Activated CD8-positive, alpha-beta memory T cell treated with anti-CD3 and anti-CD28 coated beads, Interleukin-2, amount 10 ng/mL, durations not matched to agents 7 days and 5 days (primary cell): ENCODE measurements at regions of chr3 and their contacts with region 1.

Region 1: GRCh38 chr3:171248425-171249111 is 211.6 kb downstream of the TNIK start:
- DNase-seq: no peak
- ATAC-seq: peak; percentile 76
- H3K4me3 Mint-ChIP-seq: no peak overlapping the region
- H3K27ac Mint-ChIP-seq: no peak overlapping the region
- H3K4me1 Mint-ChIP-seq: peaks cover 34% of the 10 kb centered on the region
- H3K27me3 Mint-ChIP-seq: no peaks in the 10 kb centered on the region

Region 2: DNA sequence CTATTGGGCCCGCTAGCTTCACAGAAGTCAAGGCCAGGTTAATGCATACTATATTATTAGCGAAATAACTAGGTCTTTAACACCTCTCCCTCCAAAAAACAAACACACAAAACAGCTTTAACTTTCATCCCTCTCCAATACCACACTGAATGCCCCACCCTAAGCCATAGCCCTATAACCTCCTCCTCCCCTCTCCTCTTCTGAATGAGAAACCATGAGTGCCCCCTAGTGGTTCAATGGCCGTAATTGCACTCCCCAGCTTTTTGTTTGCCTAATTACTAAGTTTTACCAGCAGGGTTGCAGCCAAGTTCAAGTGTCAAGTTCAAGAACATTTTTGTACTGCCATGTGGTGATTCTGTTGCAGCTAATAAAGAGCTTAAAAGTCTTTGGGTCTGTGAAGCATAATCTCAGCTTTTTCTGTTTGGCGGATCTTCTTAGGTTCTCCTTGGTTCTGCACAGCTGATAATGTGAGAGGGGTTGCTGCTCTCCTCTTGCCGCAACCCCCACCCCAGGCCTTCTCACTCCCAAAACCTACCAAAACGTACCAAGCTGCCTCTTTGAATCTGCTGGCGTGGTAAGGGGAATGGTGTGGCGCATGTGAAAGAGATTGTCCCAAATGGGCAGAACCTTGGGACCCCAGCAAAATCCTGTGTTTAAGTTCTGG is 436.5 kb before region 1 on chr3:
- CTCF ChIA-PET with region 1: no interaction called
- DNase-seq: peak; percentile 77
- ATAC-seq: peak; percentile 72
- H3K4me3 Mint-ChIP-seq: no peak overlapping the region
- H3K27ac Mint-ChIP-seq: no peak overlapping the region
- H3K4me1 Mint-ChIP-seq: no peaks in the 10 kb centered on the region
- H3K27me3 Mint-ChIP-seq: peaks cover 5% of the 10 kb centered on the region

Region 3: GRCh38 chr3:171269542-171269941 is 21.0 kb after region 1 on chr3:
- CTCF ChIA-PET with region 1: interaction called, 12 read pairs
- DNase-seq: no peak
- ATAC-seq: peak; percentile 67
- H3K4me3 Mint-ChIP-seq: peak overlapping the region; percentile 63
- H3K27ac Mint-ChIP-seq: peak overlapping the region; percentile 78
- H3K4me1 Mint-ChIP-seq: peaks cover 68% of the 10 kb centered on the region
- H3K27me3 Mint-ChIP-seq: no peaks in the 10 kb centered on the region